Dendritic cell treated with granulocyte-macrophage colony-stimulating factor and Interleukin-4, amounts not matched to agents 40 ng/mL and 50 ng/mL, for 4 days (primary cell): ENCODE measurements at regions of chr14 and their contacts with region 1.

Region 1: DNA sequence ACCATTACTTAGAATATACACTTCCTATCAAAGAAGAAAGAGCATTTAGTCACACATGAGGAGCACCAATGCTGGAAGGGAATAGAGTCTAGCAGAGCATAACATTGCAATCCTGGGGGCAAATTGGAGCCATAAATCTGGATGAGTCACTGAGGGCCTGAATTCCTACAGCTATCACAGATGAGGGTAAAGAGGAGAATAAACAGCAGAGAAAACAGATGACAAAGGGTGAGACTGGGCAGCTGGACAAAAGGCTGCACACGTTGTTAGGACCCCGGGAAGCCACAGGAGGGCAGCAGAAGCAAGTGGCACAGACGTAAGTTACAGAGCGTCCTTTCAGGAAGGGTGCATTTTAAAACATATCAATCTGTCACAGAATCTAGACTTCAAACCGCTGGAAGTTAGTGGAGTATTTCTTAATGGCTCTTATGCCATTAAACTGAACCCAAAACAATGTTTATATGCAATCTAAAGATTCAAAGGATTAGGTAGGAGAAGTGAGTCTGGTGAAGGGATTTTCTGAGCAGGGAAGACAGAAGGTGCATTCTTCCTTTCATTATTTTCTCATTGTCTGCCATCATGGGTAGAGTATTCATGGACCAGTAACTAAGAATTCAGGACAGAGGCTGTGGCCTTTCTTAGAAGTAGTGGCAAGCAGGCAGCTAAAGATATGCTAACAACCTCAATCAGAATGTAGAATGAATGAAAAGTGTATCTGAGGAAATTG is 159.8 kb upstream of the DAAM1 start:
- H3K4me3 Mint-ChIP-seq: no peak overlapping the region
- H3K27ac Mint-ChIP-seq: no peak overlapping the region
- H3K4me1 Mint-ChIP-seq: peaks cover 8% of the 10 kb centered on the region
- H3K27me3 Mint-ChIP-seq: no peaks in the 10 kb centered on the region

Region 2: GRCh38 chr14:58501214-58501816 is 527.3 kb before region 1 on chr14:
- intact Hi-C with region 1: loop called (anchors 10 kb)
- H3K4me3 Mint-ChIP-seq: no peak overlapping the region
- H3K27ac Mint-ChIP-seq: no peak overlapping the region
- H3K4me1 Mint-ChIP-seq: no peaks in the 10 kb centered on the region
- H3K27me3 Mint-ChIP-seq: no peaks in the 10 kb centered on the region

Region 3: GRCh38 chr14:58637391-58638230 is 391.0 kb before region 1 on chr14 and contains the start of gene DACT1:
- intact Hi-C with region 1: loop called (anchors 5 kb)
- H3K4me3 Mint-ChIP-seq: peak within 1 kb of the TSS; percentile 80
- H3K27ac Mint-ChIP-seq: peak within 1 kb of the TSS; percentile 39
- H3K4me1 Mint-ChIP-seq: peaks cover 27% of the 10 kb centered on the region
- H3K27me3 Mint-ChIP-seq: peaks cover 41% of the 10 kb centered on the region

Region 4: GRCh38 chr14:59055439-59056045 is 26.9 kb after region 1 on chr14:
- intact Hi-C with region 1: loop called (anchors 1 kb)
- H3K4me3 Mint-ChIP-seq: no peak overlapping the region
- H3K27ac Mint-ChIP-seq: no peak overlapping the region
- H3K4me1 Mint-ChIP-seq: no peaks in the 10 kb centered on the region
- H3K27me3 Mint-ChIP-seq: no peaks in the 10 kb centered on the region

Region 5: DNA sequence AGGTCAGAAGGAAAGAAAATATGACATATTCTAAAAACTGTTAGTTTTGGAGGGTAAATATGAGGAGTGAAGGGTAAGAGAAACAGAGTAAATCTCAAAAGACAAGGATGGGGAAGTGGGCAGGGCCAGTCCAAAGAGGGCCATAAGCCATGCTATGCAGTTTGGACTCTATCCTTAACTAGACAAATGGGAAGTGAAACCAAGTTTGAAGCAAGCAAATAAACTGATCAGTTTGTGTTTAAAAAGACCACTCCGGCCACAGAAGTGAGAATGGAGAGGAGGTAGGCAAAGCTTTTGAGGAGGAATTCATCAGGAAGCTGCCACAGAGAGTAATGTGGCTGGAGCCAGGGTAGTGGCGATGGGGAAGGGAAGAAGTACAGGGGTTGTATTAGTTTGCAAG is 122.4 kb after region 1 on chr14:
- intact Hi-C with region 1: no loop called
- H3K4me3 Mint-ChIP-seq: peak overlapping the region; percentile 62
- H3K27ac Mint-ChIP-seq: peak overlapping the region; percentile 85
- H3K4me1 Mint-ChIP-seq: peaks cover 37% of the 10 kb centered on the region
- H3K27me3 Mint-ChIP-seq: peaks cover 3% of the 10 kb centered on the region

Region 6: GRCh38 chr14:59439256-59439965 is 410.8 kb after region 1 on chr14:
- intact Hi-C with region 1: loop called (anchors 1 kb)
- H3K4me3 Mint-ChIP-seq: no peak overlapping the region
- H3K27ac Mint-ChIP-seq: no peak overlapping the region
- H3K4me1 Mint-ChIP-seq: peaks cover 65% of the 10 kb centered on the region
- H3K27me3 Mint-ChIP-seq: no peaks in the 10 kb centered on the region